ENCODE measurements at regions of chr5 and their contacts with region 1.

Region 1: GRCh38 chr5:59188419-59189225 is 605.7 kb downstream of the RAB3C start:
- DNase-seq: peak; percentile 37 to 89
- ATAC-seq: peak; percentile 81 to 82; a peak in 5 of 6 replicates
- H3K4me3 ChIP-seq: peak overlapping the region; percentile 25; the same call in 2 of the 3 replicates
- H3K27ac ChIP-seq: peak overlapping the region; percentile 88 to 89
- H3K4me1 ChIP-seq: peaks cover 99% of the 10 kb centered on the region
- CTCF ChIP-seq: peak; percentile 93
- EP300 ChIP-seq: no peak
- POLR2A ChIP-seq: no peak
- RAD21 ChIP-seq: peak; percentile 92 to 96

Region 2: DNA sequence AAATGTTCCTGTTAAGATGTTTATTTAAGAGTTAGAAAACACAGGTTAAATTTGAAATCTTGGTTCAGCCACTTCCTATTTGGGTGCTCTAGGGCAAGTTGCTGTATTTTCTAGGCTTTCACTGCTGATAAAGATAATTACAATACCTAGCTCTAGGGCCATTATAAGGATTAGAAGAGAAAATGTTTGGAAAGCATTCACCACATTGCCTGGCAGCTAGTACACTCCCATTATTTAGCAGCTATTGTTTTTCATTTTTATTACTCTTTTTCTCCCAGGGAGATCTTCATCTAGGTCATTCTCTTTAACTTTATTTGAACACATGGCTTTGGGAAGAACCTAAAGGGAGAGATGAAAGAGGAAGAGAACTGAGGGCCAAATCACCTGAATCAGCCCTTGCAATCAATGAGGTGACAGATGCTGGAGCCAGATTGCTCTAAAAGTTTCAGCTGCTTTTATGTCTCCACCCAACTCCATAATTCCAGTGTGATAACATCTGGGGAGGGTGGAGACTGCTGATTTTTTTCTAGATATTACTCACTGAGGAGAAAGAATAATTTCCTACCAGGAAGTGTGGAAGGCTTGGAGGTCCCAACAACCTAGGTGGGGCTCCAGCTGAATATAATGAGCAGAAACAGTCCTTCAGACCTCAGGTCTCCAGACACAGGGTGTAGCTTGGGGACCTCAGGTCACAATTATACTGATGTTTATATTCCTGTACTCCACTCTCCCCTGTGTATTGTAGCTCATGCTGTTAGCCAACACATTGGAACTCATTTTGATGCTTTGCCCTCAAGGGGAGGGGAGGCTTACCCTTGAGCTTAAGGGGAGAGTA is 34.3 kb after region 1 on chr5:
- CTCF ChIA-PET with region 1: interaction called, 16 read pairs
- POLR2A ChIA-PET with region 1: no interaction called
- DNase-seq: no peak
- ATAC-seq: peak; percentile 42 to 62; a peak in 5 of 6 replicates
- H3K4me3 ChIP-seq: no peak overlapping the region
- H3K27ac ChIP-seq: peak overlapping the region; percentile 20 to 69
- H3K4me1 ChIP-seq: peaks cover 65% of the 10 kb centered on the region
- CTCF ChIP-seq: no peak
- EP300 ChIP-seq: no peak
- POLR2A ChIP-seq: no peak
- RAD21 ChIP-seq: no peak

Region 3: DNA sequence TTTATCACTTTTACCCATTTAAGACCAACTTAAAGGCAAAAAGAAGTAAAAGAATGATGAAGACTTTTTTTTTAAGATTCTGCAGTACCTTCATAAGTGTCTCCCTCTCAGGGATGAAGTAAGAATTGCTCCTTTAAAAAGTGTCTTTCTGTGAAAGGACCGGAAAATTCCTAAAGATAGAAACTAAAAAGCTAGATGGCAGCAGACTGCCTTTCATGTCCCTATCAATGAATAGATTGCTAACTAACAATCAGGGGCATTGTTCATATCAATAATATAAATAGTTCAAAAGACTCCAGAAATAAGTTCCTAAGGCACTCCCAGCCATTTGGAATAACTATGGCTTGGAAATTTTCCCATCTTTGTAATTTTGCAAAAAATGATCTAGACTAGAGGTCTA is 146.9 kb after region 1 on chr5:
- CTCF ChIA-PET with region 1: interaction called, 13 read pairs
- POLR2A ChIA-PET with region 1: no interaction called
- DNase-seq: no peak
- ATAC-seq: no peak
- H3K4me3 ChIP-seq: no peak overlapping the region
- H3K27ac ChIP-seq: peak overlapping the region in 1 of 2 experiments; percentile 32; a peak in 1 of 6 replicates
- H3K4me1 ChIP-seq: peaks cover 69% of the 10 kb centered on the region
- CTCF ChIP-seq: peak; percentile 33
- EP300 ChIP-seq: no peak
- POLR2A ChIP-seq: no peak
- RAD21 ChIP-seq: peak in 1 of 2 experiments; percentile 24; a peak in 2 of 5 replicates

Region 4: GRCh38 chr5:59358005-59358861 is 169.6 kb after region 1 on chr5:
- CTCF ChIA-PET with region 1: interaction called, 58 read pairs
- POLR2A ChIA-PET with region 1: no interaction called
- DNase-seq: peak in 1 of 2 experiments; percentile 90
- ATAC-seq: peak; percentile 66 to 67
- H3K4me3 ChIP-seq: peak overlapping the region; percentile 0; the same call in 1 of the 3 replicates
- H3K27ac ChIP-seq: peak overlapping the region; percentile 86 to 99
- H3K4me1 ChIP-seq: peaks cover 95% of the 10 kb centered on the region
- CTCF ChIP-seq: no peak
- EP300 ChIP-seq: no peak
- POLR2A ChIP-seq: no peak
- RAD21 ChIP-seq: no peak

Region 5: DNA sequence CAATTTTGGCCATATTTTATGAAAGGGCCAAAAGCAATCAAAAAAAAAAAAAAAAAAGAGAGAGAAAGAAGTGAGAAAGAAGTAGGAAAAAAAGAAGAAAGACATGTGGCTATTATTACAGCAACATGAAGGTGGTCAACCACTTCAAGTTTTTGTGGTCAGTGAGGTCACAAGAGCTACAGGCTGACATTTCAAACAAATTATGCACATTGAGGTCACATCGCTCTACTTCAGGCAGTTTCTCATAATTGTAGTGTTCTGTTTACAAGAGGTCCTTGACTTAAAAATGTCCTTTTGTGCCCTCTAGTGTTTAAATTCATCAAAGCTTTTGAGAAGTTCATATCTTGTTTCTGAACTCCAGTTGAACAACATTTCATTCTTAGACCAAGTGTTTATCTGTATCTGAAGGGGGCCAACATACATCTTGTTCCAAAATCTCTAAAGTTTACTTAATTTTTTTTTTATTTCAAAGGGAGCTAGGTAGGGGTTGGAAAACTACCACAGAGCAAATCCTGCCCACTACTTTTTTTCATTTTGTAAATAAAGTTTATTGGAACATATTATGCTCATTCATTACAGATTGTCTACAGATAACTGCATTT is 191.8 kb after region 1 on chr5:
- CTCF ChIA-PET with region 1: interaction called, 40 read pairs
- POLR2A ChIA-PET with region 1: no interaction called
- DNase-seq: peak in 1 of 2 experiments; percentile 92
- ATAC-seq: peak; percentile 84 to 86
- H3K4me3 ChIP-seq: no peak overlapping the region
- H3K27ac ChIP-seq: peak overlapping the region; percentile 45 to 73
- H3K4me1 ChIP-seq: peaks cover 58% of the 10 kb centered on the region
- CTCF ChIP-seq: peak; percentile 66
- EP300 ChIP-seq: no peak
- POLR2A ChIP-seq: no peak
- RAD21 ChIP-seq: peak; percentile 78 to 83

Measured in A549 (cell line).